ENCODE measurements at regions of chr11 and their contacts with region 1.

Region 1: DNA sequence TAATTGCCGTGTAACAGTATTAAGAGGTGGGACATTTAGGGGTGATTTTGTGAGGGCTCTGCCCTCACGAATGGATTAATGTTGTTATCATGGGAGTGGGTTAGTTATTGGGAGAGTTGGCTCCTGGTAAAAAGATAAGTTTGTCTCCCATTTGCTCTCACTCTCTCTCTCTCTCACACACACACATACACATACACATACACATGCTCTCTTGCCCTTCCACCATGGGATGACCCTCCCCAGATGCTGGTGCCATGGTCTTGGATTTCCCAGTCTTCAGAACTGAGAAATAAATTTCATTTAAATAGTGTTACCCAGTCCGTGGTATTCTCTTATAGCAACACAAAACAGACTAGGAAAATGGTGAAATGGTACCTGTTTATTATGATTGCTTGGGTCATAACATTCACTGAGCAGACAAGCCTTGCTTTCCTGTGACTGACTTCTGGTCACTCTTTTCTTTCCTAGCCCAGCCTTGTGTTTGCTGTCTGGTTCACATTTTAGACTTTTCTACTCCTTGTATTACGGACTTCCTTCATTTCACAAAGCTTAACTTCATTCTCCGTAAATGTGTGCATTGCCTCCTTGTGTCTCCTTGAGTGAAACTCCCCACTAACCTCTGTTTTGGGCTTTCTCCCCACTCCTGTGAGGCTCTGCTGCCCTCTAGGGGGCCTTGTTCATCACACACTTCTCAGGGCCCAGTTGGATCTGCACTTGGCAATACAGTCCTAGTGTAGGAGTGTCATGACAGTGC is 206.5 kb upstream of the CTSC start:
- DNase-seq: peak; percentile 73
- ATAC-seq: peak; percentile 100
- H3K4me3 ChIP-seq: no peak overlapping the region
- H3K27ac ChIP-seq: peak overlapping the region; percentile 45
- H3K4me1 ChIP-seq: no peaks in the 10 kb centered on the region
- H3K27me3 ChIP-seq: no peaks in the 10 kb centered on the region
- CTCF ChIP-seq: peak; percentile 94 to 100 (median 99); a peak in 5 of 6 replicates
- EP300 ChIP-seq: no peak
- POLR2A ChIP-seq: no peak
- RAD21 ChIP-seq: peak; percentile 100

Region 2: GRCh38 chr11:87463486-87464102 is 1080.5 kb before region 1 on chr11:
- CTCF ChIA-PET with region 1: no interaction called
- POLR2A ChIA-PET with region 1: no interaction called
- RAD21 ChIA-PET with region 1: no interaction called
- SMC1A ChIA-PET with region 1: no interaction called
- in situ Hi-C with region 1: no loop called
- intact Hi-C with region 1: loop called (anchors 10 kb)
- DNase-seq: no peak
- ATAC-seq: peak; percentile 57
- H3K4me3 ChIP-seq: no peak overlapping the region
- H3K27ac ChIP-seq: no peak overlapping the region
- H3K4me1 ChIP-seq: no peaks in the 10 kb centered on the region
- H3K27me3 ChIP-seq: no peaks in the 10 kb centered on the region
- CTCF ChIP-seq: peak; percentile 15 to 42 (median 31); a peak in 4 of 6 replicates
- EP300 ChIP-seq: no peak
- POLR2A ChIP-seq: no peak
- RAD21 ChIP-seq: peak; percentile 68

Region 3: GRCh38 chr11:88016392-88017170 is 527.5 kb before region 1 on chr11:
- CTCF ChIA-PET with region 1: interaction called, 107 read pairs
- POLR2A ChIA-PET with region 1: no interaction called
- RAD21 ChIA-PET with region 1: interaction called, 46 read pairs
- SMC1A ChIA-PET with region 1: interaction called, 60 read pairs
- in situ Hi-C with region 1: loop called (anchors 25 kb)
- intact Hi-C with region 1: loop called (anchors 1 kb)
- DNase-seq: peak; percentile 27
- ATAC-seq: peak; percentile 98
- H3K4me3 ChIP-seq: no peak overlapping the region
- H3K27ac ChIP-seq: no peak overlapping the region
- H3K4me1 ChIP-seq: no peaks in the 10 kb centered on the region
- H3K27me3 ChIP-seq: no peaks in the 10 kb centered on the region; a peak in 1 of 4 replicates
- CTCF ChIP-seq: peak; percentile 72 to 88 (median 76); a peak in 5 of 6 replicates
- EP300 ChIP-seq: no peak
- POLR2A ChIP-seq: no peak
- RAD21 ChIP-seq: peak; percentile 96

Region 4: GRCh38 chr11:88169471-88169870 is 374.6 kb before region 1 on chr11:
- CTCF ChIA-PET with region 1: interaction called, 12 read pairs
- POLR2A ChIA-PET with region 1: no interaction called
- RAD21 ChIA-PET with region 1: no interaction called
- SMC1A ChIA-PET with region 1: interaction called, 16 read pairs
- in situ Hi-C with region 1: no loop called
- intact Hi-C with region 1: loop called (anchors 2 kb)
- DNase-seq: no peak
- ATAC-seq: no peak
- H3K4me3 ChIP-seq: no peak overlapping the region
- H3K27ac ChIP-seq: no peak overlapping the region
- H3K4me1 ChIP-seq: no peaks in the 10 kb centered on the region; the same call in 1 of the 2 replicates
- H3K27me3 ChIP-seq: no peaks in the 10 kb centered on the region
- CTCF ChIP-seq: no peak
- EP300 ChIP-seq: no peak
- POLR2A ChIP-seq: no peak
- RAD21 ChIP-seq: no peak

Region 5: DNA sequence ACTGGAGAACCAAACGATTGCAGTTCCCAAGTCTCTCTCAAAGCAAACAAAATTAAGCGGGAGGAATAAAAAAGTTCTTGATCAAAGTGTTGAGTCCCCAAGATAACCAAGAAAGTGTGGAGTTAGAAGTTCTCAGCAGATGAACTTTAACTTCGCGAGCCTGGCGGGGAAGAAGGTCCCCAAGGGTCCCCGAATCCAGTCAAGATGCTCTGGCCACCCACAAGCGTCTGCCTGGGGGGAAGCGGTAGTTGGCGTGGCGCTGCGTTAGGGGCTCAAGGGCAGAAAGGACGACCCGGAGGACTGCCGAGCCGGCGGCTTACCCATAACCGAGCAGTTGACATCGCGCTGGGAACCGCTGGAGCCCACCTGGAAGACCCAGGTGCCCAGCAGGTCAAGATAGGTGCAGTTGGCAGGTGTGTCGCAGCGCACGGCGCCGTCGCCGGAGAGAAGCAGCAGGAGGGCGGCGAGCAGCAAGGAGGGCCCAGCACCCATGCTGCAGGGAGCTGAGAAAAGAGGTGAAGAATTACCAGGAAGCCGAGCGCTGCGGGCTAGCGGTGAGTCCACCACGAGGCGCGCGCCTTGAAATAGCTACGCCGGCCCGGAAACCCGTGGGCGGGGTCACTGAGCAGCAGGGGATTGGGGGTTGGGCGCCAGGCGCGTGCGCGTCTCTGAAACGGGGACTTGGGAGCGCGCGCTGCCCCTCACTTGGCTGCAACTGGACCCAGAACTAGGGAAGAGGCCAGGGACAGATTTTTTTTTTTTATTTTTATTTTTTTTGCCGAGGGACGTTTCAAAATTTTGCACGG is 206.7 kb before region 1 on chr11 and contains the start of gene CTSC:
- CTCF ChIA-PET with region 1: interaction called, 3 read pairs
- POLR2A ChIA-PET with region 1: interaction called, 3 read pairs
- RAD21 ChIA-PET with region 1: no interaction called
- SMC1A ChIA-PET with region 1: interaction called, 3 read pairs
- in situ Hi-C with region 1: no loop called
- intact Hi-C with region 1: loop called (anchors 5 kb)
- DNase-seq: no peak
- ATAC-seq: peak; percentile 82
- H3K4me3 ChIP-seq: peak within 1 kb of the TSS; percentile 99
- H3K27ac ChIP-seq: peak within 1 kb of the TSS; percentile 84
- H3K4me1 ChIP-seq: no peaks in the 10 kb centered on the region; the same call in 1 of the 2 replicates
- H3K27me3 ChIP-seq: no peaks in the 10 kb centered on the region
- CTCF ChIP-seq: no peak
- EP300 ChIP-seq: peak in 1 of 2 experiments; percentile 48; a peak in 1 of 4 replicates
- POLR2A ChIP-seq: peak; percentile 100
- RAD21 ChIP-seq: peak; percentile 20; the same call in 1 of the 2 replicates
- polyA plus RNA-seq, gene CTSC: 709 to 1,123 TPM

Region 6: DNA sequence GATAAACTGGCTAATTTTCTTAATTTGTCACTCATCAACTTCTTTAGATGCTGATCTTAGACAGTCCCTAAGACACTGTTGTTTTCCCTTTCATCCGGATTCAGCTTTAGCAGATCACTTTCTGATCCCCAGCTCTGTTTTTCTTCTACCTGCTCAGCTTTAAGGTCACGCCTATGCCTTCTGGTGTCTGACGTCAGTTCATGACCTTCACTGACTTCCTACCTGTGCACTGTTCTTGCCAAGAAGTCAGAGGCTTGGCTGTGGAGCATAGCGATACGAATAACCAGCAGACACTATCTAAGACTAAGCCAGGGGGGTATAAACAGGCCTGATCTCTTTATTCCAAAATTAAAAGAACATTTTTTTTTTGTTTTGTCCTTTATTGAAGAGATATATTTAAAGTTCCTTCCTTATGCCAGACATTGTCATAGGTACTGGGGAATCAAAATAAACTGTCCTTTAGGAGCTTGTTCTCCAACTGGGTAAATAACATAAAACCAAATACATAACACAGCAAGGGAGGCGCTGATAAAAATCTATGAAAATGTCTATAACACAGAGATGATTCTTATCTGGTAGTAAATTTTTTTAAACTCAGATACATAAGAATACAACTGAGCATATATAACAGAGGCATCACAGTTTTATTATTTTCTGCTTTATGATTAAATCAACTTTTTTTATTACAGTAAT is 145.6 kb after region 1 on chr11:
- CTCF ChIA-PET with region 1: no interaction called
- POLR2A ChIA-PET with region 1: no interaction called
- RAD21 ChIA-PET with region 1: no interaction called
- SMC1A ChIA-PET with region 1: no interaction called
- in situ Hi-C with region 1: no loop called
- intact Hi-C with region 1: no loop called
- DNase-seq: no peak
- ATAC-seq: no peak
- H3K4me3 ChIP-seq: no peak overlapping the region
- H3K27ac ChIP-seq: no peak overlapping the region
- H3K4me1 ChIP-seq: no peaks in the 10 kb centered on the region
- H3K27me3 ChIP-seq: no peaks in the 10 kb centered on the region; a peak in 1 of 4 replicates
- CTCF ChIP-seq: no peak
- EP300 ChIP-seq: no peak
- POLR2A ChIP-seq: no peak
- RAD21 ChIP-seq: no peak

Region 7: DNA sequence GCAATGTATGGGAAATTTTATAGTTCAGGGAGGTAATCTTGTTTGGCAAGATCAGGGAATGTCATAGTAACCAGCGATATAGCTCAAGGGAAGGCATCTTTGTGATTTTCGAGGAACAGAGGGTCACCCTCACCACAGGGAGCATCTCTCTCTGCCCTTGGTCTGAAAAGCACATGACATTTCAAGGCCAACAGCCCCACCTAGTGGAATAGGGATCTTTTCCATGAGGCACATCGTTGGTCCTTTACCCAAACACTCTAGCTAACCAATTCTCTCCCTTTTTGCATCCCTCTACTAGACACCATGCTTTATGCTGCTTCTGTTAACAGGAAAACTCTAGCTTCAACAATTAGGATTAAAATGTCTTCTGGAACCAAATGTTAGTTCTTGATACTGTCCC is 342.7 kb after region 1 on chr11:
- CTCF ChIA-PET with region 1: interaction called, 10 read pairs
- POLR2A ChIA-PET with region 1: no interaction called
- RAD21 ChIA-PET with region 1: interaction called, 8 read pairs
- SMC1A ChIA-PET with region 1: interaction called, 5 read pairs
- in situ Hi-C with region 1: loop called (anchors 10 kb)
- intact Hi-C with region 1: loop called (anchors 2 kb)
- DNase-seq: peak; percentile 11
- ATAC-seq: peak; percentile 98
- H3K4me3 ChIP-seq: no peak overlapping the region
- H3K27ac ChIP-seq: no peak overlapping the region
- H3K4me1 ChIP-seq: no peaks in the 10 kb centered on the region
- H3K27me3 ChIP-seq: no peaks in the 10 kb centered on the region
- CTCF ChIP-seq: peak; percentile 62 to 64 (median 62); a peak in 5 of 6 replicates
- EP300 ChIP-seq: no peak
- POLR2A ChIP-seq: no peak
- RAD21 ChIP-seq: peak; percentile 80